GM12878 (cell line): ENCODE measurements at regions of chr9 and their contacts with region 1.

Region 1: DNA sequence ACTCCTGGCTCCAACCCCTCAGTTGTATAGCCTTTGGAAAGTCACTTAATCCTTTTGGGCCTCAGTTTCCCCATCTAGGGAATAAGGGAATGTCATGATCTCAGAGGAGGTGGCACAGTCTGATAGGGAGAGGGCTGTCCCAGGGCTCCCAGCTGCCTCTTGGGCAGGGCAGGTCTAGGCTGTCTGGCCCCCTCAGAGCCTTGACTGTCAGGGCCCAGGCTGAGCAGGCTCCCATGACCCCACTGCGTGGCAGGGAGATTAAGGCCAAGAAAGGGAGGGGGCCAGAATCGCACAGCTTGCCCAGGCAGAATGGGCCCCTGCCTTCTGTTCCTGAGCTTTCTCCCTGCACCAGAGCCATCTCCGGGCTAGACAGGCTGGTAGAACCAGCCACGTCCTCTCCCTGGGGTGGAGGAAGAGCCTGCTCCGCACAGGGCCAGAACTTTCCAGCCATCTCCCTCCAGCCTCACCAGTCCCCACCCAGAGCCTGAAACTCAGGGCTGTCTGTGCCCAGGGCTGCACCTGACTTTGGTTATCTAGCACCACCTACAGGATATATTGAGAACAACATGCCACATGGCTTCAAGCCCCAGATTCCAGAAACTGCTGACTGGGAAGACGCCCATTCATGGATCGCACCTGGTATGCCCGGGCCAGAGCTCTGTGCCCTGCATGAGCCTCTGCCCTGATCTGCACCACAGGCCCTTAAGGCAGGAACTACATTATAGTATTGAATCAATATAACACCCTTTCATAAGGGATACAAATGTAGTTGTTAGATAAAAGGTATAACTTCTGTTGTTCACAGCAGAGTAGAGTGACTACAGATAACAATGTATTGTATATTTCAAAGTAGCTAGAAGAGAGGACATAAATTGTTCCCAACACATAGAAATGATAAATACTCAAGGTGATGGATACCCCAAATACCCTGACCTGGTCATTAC is 32.0 kb downstream of the NAIF1 start:
- DNase-seq: peak; percentile 60
- ATAC-seq: peak; percentile 82
- H3K4me3 ChIP-seq: no peak overlapping the region
- H3K27ac ChIP-seq: no peak overlapping the region
- H3K4me1 ChIP-seq: peaks cover 42% of the 10 kb centered on the region
- H3K27me3 ChIP-seq: no peaks in the 10 kb centered on the region
- CTCF ChIP-seq: peak; percentile 82 to 91 (median 91); a peak in 5 of 6 replicates
- EP300 ChIP-seq: no peak
- POLR2A ChIP-seq: no peak
- RAD21 ChIP-seq: peak; percentile 98

Region 2: GRCh38 chr9:127970401-127971313 is 64.4 kb before region 1 on chr9:
- CTCF ChIA-PET with region 1: interaction called, 13 read pairs
- POLR2A ChIA-PET with region 1: interaction called, 3 read pairs
- RAD21 ChIA-PET with region 1: interaction called, 10 read pairs
- SMC1A ChIA-PET with region 1: interaction called, 24 read pairs
- in situ Hi-C with region 1: loop called (anchors 10 kb)
- intact Hi-C with region 1: loop called (anchors 1 kb)
- DNase-seq: peak; percentile 95
- ATAC-seq: peak; percentile 92
- H3K4me3 ChIP-seq: peak overlapping the region; percentile 50; the same call in 1 of the 2 replicates
- H3K27ac ChIP-seq: peak overlapping the region; percentile 63
- H3K4me1 ChIP-seq: peaks cover 50% of the 10 kb centered on the region
- H3K27me3 ChIP-seq: no peaks in the 10 kb centered on the region
- CTCF ChIP-seq: no peak
- EP300 ChIP-seq: peak; percentile 72 to 90; a peak in 3 of 4 replicates
- POLR2A ChIP-seq: no peak; the same call in 1 of the 2 replicates
- RAD21 ChIP-seq: no peak

Region 3: GRCh38 chr9:127980706-127981558 is 54.2 kb before region 1 on chr9 and contains the start of gene EEIG1:
- CTCF ChIA-PET with region 1: interaction called, 10 read pairs
- POLR2A ChIA-PET with region 1: interaction called, 4 read pairs
- RAD21 ChIA-PET with region 1: interaction called, 12 read pairs
- SMC1A ChIA-PET with region 1: interaction called, 20 read pairs
- in situ Hi-C with region 1: no loop called
- intact Hi-C with region 1: no loop called
- DNase-seq: no peak
- ATAC-seq: peak; percentile 88
- H3K4me3 ChIP-seq: peak within 1 kb of the TSS; percentile 93
- H3K27ac ChIP-seq: peak within 1 kb of the TSS; percentile 76
- H3K4me1 ChIP-seq: peaks cover 53% of the 10 kb centered on the region
- H3K27me3 ChIP-seq: no peaks in the 10 kb centered on the region
- CTCF ChIP-seq: no peak
- EP300 ChIP-seq: no peak
- POLR2A ChIP-seq: peak; percentile 91
- RAD21 ChIP-seq: no peak
- polyA plus RNA-seq, gene EEIG1: 1.2 to 2.7 TPM

Region 4: DNA sequence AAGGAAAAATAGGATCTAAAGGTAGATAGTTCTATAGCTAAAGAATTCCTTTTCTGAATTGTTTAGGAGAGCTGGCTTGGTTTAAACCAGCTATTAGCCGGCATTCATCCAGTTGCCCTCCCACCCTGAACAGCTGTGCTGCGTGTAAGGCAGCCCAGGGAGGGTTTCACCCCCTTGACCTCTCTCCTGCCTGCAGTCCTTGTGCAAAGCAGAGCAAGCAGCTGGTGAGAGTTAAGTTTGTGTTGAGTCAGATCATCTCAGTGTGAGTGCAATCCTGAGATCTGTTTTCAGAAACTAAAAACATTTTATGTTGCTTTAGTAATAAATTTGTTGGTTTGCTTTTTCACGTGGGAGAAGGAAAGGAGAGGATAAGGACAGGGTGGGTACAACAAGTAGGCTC is 46.0 kb after region 1 on chr9:
- CTCF ChIA-PET with region 1: interaction called, 30 read pairs
- POLR2A ChIA-PET with region 1: interaction called, 4 read pairs
- RAD21 ChIA-PET with region 1: interaction called, 5 read pairs
- SMC1A ChIA-PET with region 1: interaction called, 9 read pairs
- in situ Hi-C with region 1: no loop called
- intact Hi-C with region 1: no loop called
- DNase-seq: no peak
- ATAC-seq: peak; percentile 37; the same call in 1 of the 3 replicates
- H3K4me3 ChIP-seq: no peak overlapping the region
- H3K27ac ChIP-seq: peak overlapping the region; percentile 16
- H3K4me1 ChIP-seq: peaks cover 30% of the 10 kb centered on the region
- H3K27me3 ChIP-seq: no peaks in the 10 kb centered on the region
- CTCF ChIP-seq: no peak
- EP300 ChIP-seq: no peak
- POLR2A ChIP-seq: no peak
- RAD21 ChIP-seq: no peak

Region 5: DNA sequence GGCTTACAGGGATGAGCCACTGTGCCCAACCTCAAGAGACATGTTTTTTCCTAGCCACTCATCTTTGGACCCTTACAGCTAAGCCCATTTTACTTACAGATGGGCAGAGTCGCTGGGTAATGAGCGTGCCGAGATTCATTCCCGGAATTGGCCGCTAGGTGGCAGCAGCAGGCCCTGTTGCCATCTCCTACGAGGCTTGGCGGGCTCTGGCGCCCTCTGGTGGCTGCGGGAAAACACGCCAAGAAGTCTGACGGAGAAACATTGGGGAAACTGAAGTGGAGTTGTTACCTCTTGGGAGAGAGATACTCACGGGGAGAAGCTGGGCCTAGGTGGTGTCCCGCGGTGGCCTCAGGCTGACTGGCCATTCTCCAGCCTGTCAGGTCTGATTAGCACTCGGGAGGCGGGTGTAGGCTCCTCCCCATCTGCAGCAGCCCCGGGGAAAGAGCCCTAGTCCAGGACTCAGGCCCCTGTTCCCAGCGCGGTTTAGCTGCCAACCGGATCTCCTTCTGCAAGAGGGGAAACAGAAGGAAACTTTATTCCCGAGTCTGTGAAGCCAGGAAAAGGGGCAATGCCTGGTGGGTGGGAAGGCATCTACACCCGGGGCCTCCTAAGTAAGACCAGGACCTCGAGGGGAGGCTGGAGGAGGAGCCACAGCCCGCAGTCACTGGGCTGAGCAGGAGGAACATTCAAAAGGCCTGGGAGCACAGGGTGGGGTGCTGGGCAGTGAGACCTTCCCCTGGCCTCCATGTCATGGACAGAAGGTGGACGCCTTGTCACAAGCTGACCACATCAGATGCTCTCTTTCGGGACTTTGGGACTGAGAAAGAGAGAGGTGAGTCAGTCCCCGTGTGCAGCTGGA is 82.7 kb after region 1 on chr9:
- CTCF ChIA-PET with region 1: interaction called, 29 read pairs
- POLR2A ChIA-PET with region 1: interaction called, 3 read pairs
- RAD21 ChIA-PET with region 1: interaction called, 11 read pairs
- SMC1A ChIA-PET with region 1: interaction called, 5 read pairs
- in situ Hi-C with region 1: no loop called
- intact Hi-C with region 1: no loop called
- DNase-seq: no peak
- ATAC-seq: peak; percentile 79
- H3K4me3 ChIP-seq: no peak overlapping the region
- H3K27ac ChIP-seq: no peak overlapping the region
- H3K4me1 ChIP-seq: peaks cover 23% of the 10 kb centered on the region
- H3K27me3 ChIP-seq: no peaks in the 10 kb centered on the region
- CTCF ChIP-seq: peak; percentile 100; a peak in 5 of 6 replicates
- EP300 ChIP-seq: no peak
- POLR2A ChIP-seq: peak; percentile 65
- RAD21 ChIP-seq: peak; percentile 99